ENCODE measurements at regions of chr11 and their contacts with region 1.

Region 1: GRCh38 chr11:64778508-64779346 is at the start of gene SF1:
- DNase-seq: peak; percentile 100
- ATAC-seq: peak; percentile 95
- H3K4me3 ChIP-seq: peak within 1 kb of the TSS; percentile 88 to 92
- H3K27ac ChIP-seq: peak within 1 kb of the TSS; percentile 98
- H3K4me1 ChIP-seq: peaks cover 16% of the 10 kb centered on the region
- H3K27me3 ChIP-seq: no peaks in the 10 kb centered on the region
- CTCF ChIP-seq: no peak
- total RNA-seq, gene SF1: 360 TPM

Region 2: DNA sequence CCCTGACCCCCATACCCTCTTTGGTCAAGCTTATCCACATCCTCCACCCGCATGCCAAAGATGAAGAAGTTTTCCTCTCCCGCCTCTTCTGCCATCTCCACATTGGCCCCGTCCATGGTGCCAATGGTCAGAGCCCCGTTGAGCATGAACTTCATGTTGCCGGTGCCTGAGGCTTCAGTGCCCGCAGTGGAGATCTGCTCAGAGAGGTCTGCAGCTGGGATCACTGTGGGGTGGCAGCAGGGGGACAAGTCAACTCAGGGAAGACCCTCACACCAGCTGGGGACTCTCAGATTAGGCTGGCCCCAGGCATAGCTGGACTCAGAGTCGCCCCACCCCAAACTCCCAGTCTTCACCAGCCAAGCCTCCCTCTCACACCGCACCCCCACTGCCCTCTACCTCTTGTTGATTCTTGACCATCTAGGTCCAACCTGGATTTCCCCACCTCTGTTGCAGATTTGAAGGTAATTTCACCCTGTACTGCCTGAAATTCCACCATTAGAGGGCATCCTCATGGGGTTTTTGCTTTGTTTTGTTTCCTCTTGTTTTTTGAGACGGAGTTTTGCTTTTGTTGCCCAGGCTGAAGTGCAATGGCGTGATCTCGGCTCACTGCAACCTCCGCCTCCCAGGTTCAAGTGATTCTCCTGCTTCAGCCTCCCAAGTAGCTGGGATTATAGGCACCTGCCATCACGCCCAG is 28.2 kb before region 1 on chr11:
- CTCF ChIA-PET with region 1: no interaction called
- POLR2A ChIA-PET with region 1: no interaction called
- in situ Hi-C with region 1: no loop called
- intact Hi-C with region 1: no loop called
- DNase-seq: no peak
- ATAC-seq: no peak
- H3K4me3 ChIP-seq: no peak overlapping the region
- H3K27ac ChIP-seq: no peak overlapping the region
- H3K4me1 ChIP-seq: peaks cover 2% of the 10 kb centered on the region; the same call in 1 of the 2 replicates
- H3K27me3 ChIP-seq: no peaks in the 10 kb centered on the region
- CTCF ChIP-seq: no peak

Region 3: DNA sequence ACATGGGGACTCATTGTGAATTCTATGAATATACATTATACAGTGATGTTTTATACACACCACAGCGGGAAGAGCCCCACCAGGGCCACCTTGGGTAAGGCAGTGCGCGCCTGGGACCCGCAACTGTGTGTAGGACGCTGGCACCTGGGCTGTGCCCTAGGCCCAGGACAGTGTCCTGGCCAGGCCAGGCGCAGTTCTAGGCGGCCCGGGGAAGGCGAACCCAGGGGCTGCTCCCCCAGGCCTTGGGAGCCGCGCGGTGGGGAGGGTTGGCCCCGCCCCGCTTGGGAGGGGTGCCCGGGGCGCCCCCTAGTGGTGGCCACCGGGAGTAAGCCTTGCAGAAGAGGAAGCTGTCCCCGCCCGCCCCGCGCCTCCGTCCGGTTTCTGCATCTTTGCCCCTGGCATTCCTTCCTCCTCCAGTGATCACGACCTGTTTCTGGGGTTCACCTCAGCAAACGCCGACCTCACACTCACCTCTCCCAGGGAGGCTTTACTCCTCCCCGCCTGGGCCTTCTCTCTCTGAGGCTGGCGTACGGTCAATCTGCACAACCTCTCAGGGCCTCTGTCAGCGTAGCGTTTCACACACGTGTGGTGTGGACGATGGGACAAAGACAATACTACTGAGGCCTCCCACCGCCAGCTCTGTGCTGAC is 109.2 kb after region 1 on chr11:
- CTCF ChIA-PET with region 1: no interaction called
- POLR2A ChIA-PET with region 1: interaction called, 18 read pairs
- in situ Hi-C with region 1: no loop called
- intact Hi-C with region 1: no loop called
- DNase-seq: no peak
- ATAC-seq: peak; percentile 92
- H3K4me3 ChIP-seq: peak overlapping the region; percentile 37 to 56
- H3K27ac ChIP-seq: peak overlapping the region; percentile 85
- H3K4me1 ChIP-seq: peaks cover 19% of the 10 kb centered on the region
- H3K27me3 ChIP-seq: no peaks in the 10 kb centered on the region
- CTCF ChIP-seq: peak; percentile 100

Region 4: DNA sequence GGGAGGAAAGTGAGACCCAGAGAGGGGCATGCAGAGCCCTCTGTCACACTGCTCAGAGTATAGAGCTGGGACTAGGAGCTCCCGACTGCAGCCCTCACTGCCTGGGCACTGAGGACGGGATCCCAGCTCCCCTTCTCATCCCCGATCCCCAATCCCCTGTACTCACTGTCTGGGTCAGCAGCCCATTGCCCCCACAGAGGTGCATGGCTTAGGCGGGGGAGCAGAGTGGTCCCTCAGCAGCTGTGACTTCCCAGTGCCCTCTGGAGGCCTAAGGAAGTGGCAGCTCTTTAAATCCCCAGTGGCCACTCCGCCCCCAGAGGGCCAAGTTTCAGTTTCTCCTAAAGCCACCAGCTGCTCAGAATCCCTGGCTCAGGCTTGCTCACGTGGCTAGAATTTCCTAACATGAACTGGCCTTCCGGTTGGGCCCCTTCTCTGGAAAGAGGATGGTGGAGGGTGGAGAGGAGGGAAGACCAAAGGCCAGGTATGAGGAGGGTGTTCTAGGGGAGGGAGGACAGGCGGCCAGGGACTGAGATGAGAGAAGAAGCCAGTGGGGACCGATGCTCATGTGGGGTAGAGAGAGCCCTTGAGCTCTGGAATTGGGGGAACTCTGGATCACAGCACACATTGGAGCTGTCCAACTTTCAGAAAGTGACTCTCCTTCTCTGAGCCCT is 218.1 kb after region 1 on chr11 and contains the start of gene BATF2:
- CTCF ChIA-PET with region 1: no interaction called
- POLR2A ChIA-PET with region 1: interaction called, 19 read pairs
- in situ Hi-C with region 1: no loop called
- intact Hi-C with region 1: no loop called
- DNase-seq: no peak
- ATAC-seq: peak; percentile 96
- H3K4me3 ChIP-seq: peak within 1 kb of the TSS; percentile 17 to 60
- H3K27ac ChIP-seq: peak within 1 kb of the TSS; percentile 79
- H3K4me1 ChIP-seq: peaks cover 4% of the 10 kb centered on the region; the same call in 1 of the 2 replicates
- H3K27me3 ChIP-seq: no peaks in the 10 kb centered on the region
- CTCF ChIP-seq: peak; percentile 90; the same call in 1 of the 2 replicates
- total RNA-seq, gene BATF2: 1.6 TPM

Measured in Panc1 (cell line).